IMR-90 (cell line): ENCODE measurements at regions of chr9 and their contacts with region 1.

Region 1: GRCh38 chr9:110623462-110624025 is 44.0 kb upstream of the SVEP1 start:
- DNase-seq: peak; percentile 70
- ATAC-seq: peak; percentile 11; the same call in 1 of the 2 replicates
- H3K4me3 ChIP-seq: no peak overlapping the region
- H3K27ac ChIP-seq: no peak overlapping the region
- H3K4me1 ChIP-seq: peaks cover 5% of the 10 kb centered on the region
- H3K27me3 ChIP-seq: no peaks in the 10 kb centered on the region
- CTCF ChIP-seq: peak; percentile 76
- POLR2A ChIP-seq: no peak
- RAD21 ChIP-seq: peak; percentile 81

Region 2: GRCh38 chr9:110183208-110184145 is 440.1 kb before region 1 on chr9:
- CTCF ChIA-PET with region 1: interaction called, 5 read pairs
- POLR2A ChIA-PET with region 1: no interaction called
- dilution Hi-C with region 1: no loop called
- in situ Hi-C with region 1: loop called (anchors 25 kb)
- intact Hi-C with region 1: loop called (anchors 2 kb)
- DNase-seq: peak; percentile 77
- ATAC-seq: peak; percentile 35; the same call in 1 of the 2 replicates
- H3K4me3 ChIP-seq: no peak overlapping the region
- H3K27ac ChIP-seq: no peak overlapping the region
- H3K4me1 ChIP-seq: peaks cover 9% of the 10 kb centered on the region
- H3K27me3 ChIP-seq: no peaks in the 10 kb centered on the region
- CTCF ChIP-seq: peak; percentile 73
- POLR2A ChIP-seq: no peak; the same call in 1 of the 2 replicates
- RAD21 ChIP-seq: peak; percentile 83

Region 3: DNA sequence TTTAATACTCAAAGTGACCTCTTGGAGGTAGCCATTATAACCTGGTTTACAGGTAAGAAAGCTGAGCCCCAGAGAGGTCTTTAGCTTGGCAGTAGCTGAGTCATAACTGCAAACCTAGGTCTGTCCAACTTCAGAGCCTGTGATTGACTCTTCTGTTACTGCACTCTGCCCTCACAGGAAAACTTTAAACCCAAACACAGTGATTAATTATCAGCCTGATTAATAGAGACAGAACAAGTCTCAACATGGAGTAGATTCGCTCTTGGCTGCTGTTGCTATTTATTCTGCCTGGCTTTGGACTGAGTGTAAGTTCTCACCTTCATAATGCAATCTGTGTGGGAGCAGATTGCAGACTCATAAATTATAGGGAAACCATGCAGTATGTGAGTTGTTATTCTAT is 339.8 kb before region 1 on chr9:
- CTCF ChIA-PET with region 1: no interaction called
- POLR2A ChIA-PET with region 1: no interaction called
- dilution Hi-C with region 1: no loop called
- in situ Hi-C with region 1: loop called (anchors 25 kb)
- intact Hi-C with region 1: no loop called
- DNase-seq: no peak
- ATAC-seq: no peak
- H3K4me3 ChIP-seq: no peak overlapping the region
- H3K27ac ChIP-seq: no peak overlapping the region
- H3K4me1 ChIP-seq: peaks cover 2% of the 10 kb centered on the region; the same call in 1 of the 2 replicates
- H3K27me3 ChIP-seq: peaks cover 7% of the 10 kb centered on the region; the same call in 1 of the 2 replicates
- CTCF ChIP-seq: no peak
- POLR2A ChIP-seq: no peak
- RAD21 ChIP-seq: no peak

Region 4: GRCh38 chr9:110452227-110452801 is 171.2 kb before region 1 on chr9:
- CTCF ChIA-PET with region 1: no interaction called
- POLR2A ChIA-PET with region 1: no interaction called
- dilution Hi-C with region 1: no loop called
- in situ Hi-C with region 1: no loop called
- intact Hi-C with region 1: loop called (anchors 2 kb)
- DNase-seq: peak; percentile 15
- ATAC-seq: no peak
- H3K4me3 ChIP-seq: no peak overlapping the region
- H3K27ac ChIP-seq: no peak overlapping the region
- H3K4me1 ChIP-seq: no peaks in the 10 kb centered on the region
- H3K27me3 ChIP-seq: no peaks in the 10 kb centered on the region
- CTCF ChIP-seq: peak; percentile 39
- POLR2A ChIP-seq: no peak
- RAD21 ChIP-seq: peak; percentile 34

Region 5: GRCh38 chr9:110538225-110539041 is 85.1 kb before region 1 on chr9:
- CTCF ChIA-PET with region 1: interaction called, 3 read pairs
- POLR2A ChIA-PET with region 1: no interaction called
- dilution Hi-C with region 1: no loop called
- in situ Hi-C with region 1: no loop called
- intact Hi-C with region 1: loop called (anchors 5 kb)
- DNase-seq: peak; percentile 75
- ATAC-seq: peak; percentile 79
- H3K4me3 ChIP-seq: no peak overlapping the region
- H3K27ac ChIP-seq: peak overlapping the region; percentile 63; the same call in 1 of the 2 replicates
- H3K4me1 ChIP-seq: peaks cover 6% of the 10 kb centered on the region
- H3K27me3 ChIP-seq: no peaks in the 10 kb centered on the region
- CTCF ChIP-seq: no peak
- POLR2A ChIP-seq: no peak
- RAD21 ChIP-seq: no peak

Region 6: DNA sequence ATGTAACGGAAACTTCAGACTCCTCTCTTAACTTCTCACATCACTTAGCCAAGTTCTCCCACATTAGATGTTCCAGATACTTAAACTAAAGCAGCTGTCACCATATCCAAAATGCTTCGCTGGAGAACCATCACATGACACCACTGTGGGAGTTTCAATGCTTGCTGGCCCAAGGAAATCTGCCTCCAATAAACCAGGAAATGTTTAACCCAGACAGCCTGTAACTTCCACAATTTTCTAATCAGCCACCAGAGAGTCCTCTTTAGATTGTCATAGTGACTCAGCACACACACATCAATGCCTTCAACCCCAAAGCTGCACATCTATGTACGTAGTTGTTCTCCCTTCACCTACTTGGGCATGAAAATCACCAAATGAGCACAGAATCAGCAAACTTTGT is 296.1 kb after region 1 on chr9:
- CTCF ChIA-PET with region 1: no interaction called
- POLR2A ChIA-PET with region 1: no interaction called
- dilution Hi-C with region 1: no loop called
- in situ Hi-C with region 1: loop called (anchors 25 kb)
- intact Hi-C with region 1: no loop called
- DNase-seq: peak; percentile 90
- ATAC-seq: peak; percentile 18
- H3K4me3 ChIP-seq: no peak overlapping the region
- H3K27ac ChIP-seq: peak overlapping the region; percentile 88
- H3K4me1 ChIP-seq: peaks cover 33% of the 10 kb centered on the region
- H3K27me3 ChIP-seq: no peaks in the 10 kb centered on the region
- CTCF ChIP-seq: no peak
- POLR2A ChIP-seq: no peak
- RAD21 ChIP-seq: peak; percentile 33; the same call in 1 of the 2 replicates

Region 7: GRCh38 chr9:110994771-110995241 is 371.3 kb after region 1 on chr9:
- CTCF ChIA-PET with region 1: no interaction called
- POLR2A ChIA-PET with region 1: no interaction called
- dilution Hi-C with region 1: no loop called
- in situ Hi-C with region 1: no loop called
- intact Hi-C with region 1: no loop called
- DNase-seq: peak; percentile 44
- ATAC-seq: no peak
- H3K4me3 ChIP-seq: no peak overlapping the region
- H3K27ac ChIP-seq: peak overlapping the region; percentile 3; the same call in 1 of the 2 replicates
- H3K4me1 ChIP-seq: peaks cover 20% of the 10 kb centered on the region
- H3K27me3 ChIP-seq: no peaks in the 10 kb centered on the region
- CTCF ChIP-seq: no peak
- POLR2A ChIP-seq: no peak
- RAD21 ChIP-seq: no peak